Mammary epithelial cell (primary cell): ENCODE measurements at regions of chr1 and their contacts with region 1.

Region 1: DNA sequence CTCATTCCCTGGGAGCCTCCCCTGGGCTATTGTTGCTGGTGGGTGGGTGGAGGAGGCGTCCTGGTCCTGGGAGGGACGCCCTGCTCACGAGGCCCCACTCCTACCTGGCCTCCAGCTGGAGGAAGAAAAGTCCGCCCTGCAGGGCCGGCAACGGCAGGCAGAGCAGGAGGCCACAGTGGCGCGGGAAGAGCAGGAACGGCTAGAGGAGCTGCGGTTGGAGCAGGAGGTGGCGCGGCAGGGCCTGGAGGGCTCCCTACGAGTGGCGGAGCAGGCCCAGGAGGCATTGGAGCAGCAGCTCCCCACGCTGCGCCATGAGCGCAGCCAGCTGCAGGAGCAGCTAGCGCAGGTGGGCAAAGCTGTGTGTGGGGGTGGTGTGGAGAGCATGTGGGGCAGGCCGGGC is 24.9 kb downstream of the CROCC start:
- DNase-seq: no peak
- H3K4me3 ChIP-seq: no peak overlapping the region
- H3K27ac ChIP-seq: no peak overlapping the region
- H3K4me1 ChIP-seq: peaks cover 23% of the 10 kb centered on the region
- H3K27me3 ChIP-seq: no peaks in the 10 kb centered on the region
- CTCF ChIP-seq: no peak

Region 2: DNA sequence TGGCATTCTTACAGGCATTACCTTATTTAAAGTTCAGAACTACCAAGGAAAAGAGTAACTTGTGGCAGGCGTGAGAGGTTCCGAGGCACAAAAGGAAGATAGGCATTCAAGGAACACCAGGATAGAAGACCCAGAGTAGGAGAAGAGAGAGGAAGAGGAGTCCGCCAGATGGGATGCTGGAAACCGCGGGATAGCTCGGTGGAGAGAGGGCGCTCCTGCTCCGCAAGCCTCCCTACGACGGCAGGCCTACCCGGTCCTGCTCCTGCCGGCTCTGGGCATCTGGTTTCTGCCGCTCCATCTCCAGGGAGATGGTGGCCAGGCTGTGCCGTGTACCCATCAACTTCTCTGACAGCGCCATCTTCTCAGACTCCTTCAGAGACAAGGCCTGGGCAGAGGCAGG is 327.9 kb before region 1 on chr1:
- CTCF ChIA-PET with region 1: interaction called, 7 read pairs
- dilution Hi-C with region 1: no loop called
- in situ Hi-C with region 1: no loop called
- intact Hi-C with region 1: loop called (anchors 1 kb)
- DNase-seq: no peak
- H3K4me3 ChIP-seq: no peak overlapping the region
- H3K27ac ChIP-seq: no peak overlapping the region
- H3K4me1 ChIP-seq: peaks cover 26% of the 10 kb centered on the region
- H3K27me3 ChIP-seq: no peaks in the 10 kb centered on the region
- CTCF ChIP-seq: no peak

Region 3: DNA sequence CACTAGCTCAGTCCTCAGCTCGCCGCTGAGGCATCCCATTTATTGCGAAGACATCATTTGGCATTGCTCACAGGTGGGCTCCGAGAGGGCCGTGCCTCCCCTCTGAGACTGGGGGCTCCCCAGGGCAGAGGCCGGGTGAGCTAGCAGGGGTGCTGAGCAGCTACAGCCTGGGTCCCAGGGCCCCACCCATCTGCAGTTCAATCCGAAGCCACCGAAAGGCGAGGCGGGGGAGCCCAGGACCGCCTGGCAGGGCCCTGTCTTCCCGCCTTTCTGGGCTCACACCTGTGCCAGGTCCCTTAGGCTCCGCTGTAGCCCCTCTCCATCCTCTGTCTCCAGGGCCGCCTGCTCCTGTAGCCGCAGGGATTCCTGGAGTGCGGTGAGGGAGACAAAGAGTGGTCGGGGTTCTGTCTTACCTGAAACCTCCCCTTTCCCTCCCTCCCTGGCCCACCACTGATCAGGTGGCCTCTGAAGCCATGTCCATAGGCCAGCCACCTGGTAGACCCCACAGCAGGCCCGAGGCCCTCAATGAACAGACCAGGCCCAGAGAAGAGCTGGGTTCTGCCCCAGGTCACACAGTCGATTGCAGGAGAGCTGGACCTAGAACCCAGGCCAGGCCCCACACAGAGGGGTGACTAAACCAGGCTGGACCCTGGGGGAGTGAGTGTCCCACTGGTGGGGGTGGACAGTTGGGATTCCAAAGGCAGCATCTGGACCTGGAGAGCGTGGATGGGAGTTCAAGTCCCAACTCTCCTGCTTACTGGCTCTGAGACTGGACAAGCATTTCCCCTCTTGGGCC is 315.2 kb before region 1 on chr1:
- CTCF ChIA-PET with region 1: no interaction called
- dilution Hi-C with region 1: no loop called
- in situ Hi-C with region 1: no loop called
- intact Hi-C with region 1: no loop called
- DNase-seq: no peak
- H3K4me3 ChIP-seq: no peak overlapping the region
- H3K27ac ChIP-seq: no peak overlapping the region
- H3K4me1 ChIP-seq: no peaks in the 10 kb centered on the region
- H3K27me3 ChIP-seq: no peaks in the 10 kb centered on the region
- CTCF ChIP-seq: no peak

Region 4: GRCh38 chr1:16904560-16905111 is 42.0 kb before region 1 on chr1:
- CTCF ChIA-PET with region 1: no interaction called
- dilution Hi-C with region 1: no loop called
- in situ Hi-C with region 1: no loop called
- intact Hi-C with region 1: loop called (anchors 5 kb)
- DNase-seq: peak; percentile 97
- H3K4me3 ChIP-seq: peak overlapping the region; percentile 52 to 69 (median 54)
- H3K27ac ChIP-seq: peak overlapping the region; percentile 100
- H3K4me1 ChIP-seq: peaks cover 19% of the 10 kb centered on the region
- H3K27me3 ChIP-seq: no peaks in the 10 kb centered on the region
- CTCF ChIP-seq: no peak

Region 5: GRCh38 chr1:16926491-16927073 is 20.1 kb before region 1 on chr1:
- CTCF ChIA-PET with region 1: no interaction called
- dilution Hi-C with region 1: no loop called
- in situ Hi-C with region 1: no loop called
- intact Hi-C with region 1: loop called (anchors 1 kb)
- DNase-seq: no peak
- H3K4me3 ChIP-seq: no peak overlapping the region
- H3K27ac ChIP-seq: no peak overlapping the region
- H3K4me1 ChIP-seq: peaks cover 39% of the 10 kb centered on the region
- H3K27me3 ChIP-seq: no peaks in the 10 kb centered on the region
- CTCF ChIP-seq: no peak

Region 6: DNA sequence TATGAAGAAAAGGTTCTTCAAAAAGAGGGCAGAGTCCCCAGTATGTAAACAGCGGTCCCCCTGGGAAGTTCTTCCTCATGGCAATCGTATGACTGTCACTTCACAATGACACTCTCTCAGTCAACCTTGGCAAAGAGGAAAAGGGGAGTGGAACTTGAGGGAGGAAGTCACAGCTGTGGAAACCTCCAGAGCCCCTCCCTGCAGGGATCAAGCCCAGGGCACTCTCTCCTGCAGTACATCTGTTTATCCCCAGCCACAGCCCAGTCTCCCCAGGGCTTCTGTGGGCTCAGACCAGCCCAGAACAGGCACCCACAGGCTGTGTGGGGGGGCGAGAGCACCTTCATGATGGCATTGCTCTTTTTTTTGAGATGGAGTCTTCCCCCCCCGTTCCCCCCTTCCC is 63.1 kb after region 1 on chr1:
- CTCF ChIA-PET with region 1: no interaction called
- dilution Hi-C with region 1: no loop called
- in situ Hi-C with region 1: no loop called
- intact Hi-C with region 1: no loop called
- DNase-seq: no peak
- H3K4me3 ChIP-seq: no peak overlapping the region
- H3K27ac ChIP-seq: no peak overlapping the region
- H3K4me1 ChIP-seq: peaks cover 35% of the 10 kb centered on the region
- H3K27me3 ChIP-seq: no peaks in the 10 kb centered on the region
- CTCF ChIP-seq: no peak